Psoas muscle (tissue), 8 donors: ENCODE measurements at regions of chr10 and their contacts with region 1.

Region 1: GRCh38 chr10:76036111-76036940 is 604.9 kb downstream of the LRMDA start:
- DNase-seq: peak; percentile 72 to 82
- ATAC-seq: peak; percentile 84 to 97 (median 88)
- H3K4me3 ChIP-seq: peak overlapping the region; percentile 49
- H3K27ac ChIP-seq: no peak overlapping the region
- H3K4me1 ChIP-seq: peaks cover 3% of the 10 kb centered on the region
- H3K27me3 ChIP-seq: no peaks in the 10 kb centered on the region
- CTCF ChIP-seq: peak; percentile 91

Region 2: GRCh38 chr10:75922435-75922834 is 113.9 kb before region 1 on chr10:
- intact Hi-C with region 1: loop called in 1 of 2 experiments (anchors 5 kb)
- DNase-seq: no peak
- ATAC-seq: no peak
- H3K4me3 ChIP-seq: no peak overlapping the region
- H3K27ac ChIP-seq: no peak overlapping the region
- H3K4me1 ChIP-seq: no peaks in the 10 kb centered on the region
- H3K27me3 ChIP-seq: peaks cover 0 to 2% (median 0%) of the 10 kb centered on the region in 3 donors
- CTCF ChIP-seq: no peak

Region 3: GRCh38 chr10:75982611-75983369 is 53.5 kb before region 1 on chr10:
- intact Hi-C with region 1: no loop called
- DNase-seq: peak in 1 of 2 donors; percentile 51
- ATAC-seq: no peak
- H3K4me3 ChIP-seq: no peak overlapping the region
- H3K27ac ChIP-seq: no peak overlapping the region
- H3K4me1 ChIP-seq: no peaks in the 10 kb centered on the region
- H3K27me3 ChIP-seq: no peaks in the 10 kb centered on the region
- CTCF ChIP-seq: no peak

Region 4: GRCh38 chr10:76547352-76547972 is 511.1 kb after region 1 on chr10:
- intact Hi-C with region 1: loop called in 1 of 2 experiments (anchors 10 kb)
- DNase-seq: peak; percentile 62 to 75
- ATAC-seq: peak in 3 of 4 donors; percentile 65 to 75 (median 71)
- H3K4me3 ChIP-seq: no peak overlapping the region
- H3K27ac ChIP-seq: no peak overlapping the region
- H3K4me1 ChIP-seq: no peaks in the 10 kb centered on the region
- H3K27me3 ChIP-seq: no peaks in the 10 kb centered on the region
- CTCF ChIP-seq: peak; percentile 85